Panc1 (cell line): ENCODE measurements at regions of chr2 and their contacts with region 1.

Region 1: DNA sequence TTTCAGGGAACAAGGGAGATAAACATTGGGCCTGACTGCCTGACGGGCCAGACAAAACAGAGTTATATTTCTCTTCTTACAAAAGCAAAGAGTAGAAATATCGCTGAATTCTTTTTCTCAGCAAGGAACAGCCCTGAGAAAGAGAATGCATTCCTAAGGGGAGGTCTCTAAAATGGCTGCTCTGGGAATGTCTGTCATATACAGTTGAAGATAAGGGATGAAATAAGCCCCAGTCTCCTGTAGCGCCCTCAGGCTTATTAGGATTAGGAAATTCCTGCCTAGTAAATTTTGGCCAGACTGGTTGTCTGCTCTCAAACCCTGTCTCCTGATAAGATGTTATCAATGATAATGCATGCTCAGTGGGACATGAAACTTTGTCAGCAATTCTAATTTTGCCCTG is 134.9 kb upstream of the CNTNAP5 start:
- DNase-seq: no peak
- ATAC-seq: no peak
- H3K4me3 ChIP-seq: no peak overlapping the region
- H3K27ac ChIP-seq: no peak overlapping the region
- H3K4me1 ChIP-seq: no peaks in the 10 kb centered on the region
- H3K27me3 ChIP-seq: no peaks in the 10 kb centered on the region
- CTCF ChIP-seq: no peak

Region 2: DNA sequence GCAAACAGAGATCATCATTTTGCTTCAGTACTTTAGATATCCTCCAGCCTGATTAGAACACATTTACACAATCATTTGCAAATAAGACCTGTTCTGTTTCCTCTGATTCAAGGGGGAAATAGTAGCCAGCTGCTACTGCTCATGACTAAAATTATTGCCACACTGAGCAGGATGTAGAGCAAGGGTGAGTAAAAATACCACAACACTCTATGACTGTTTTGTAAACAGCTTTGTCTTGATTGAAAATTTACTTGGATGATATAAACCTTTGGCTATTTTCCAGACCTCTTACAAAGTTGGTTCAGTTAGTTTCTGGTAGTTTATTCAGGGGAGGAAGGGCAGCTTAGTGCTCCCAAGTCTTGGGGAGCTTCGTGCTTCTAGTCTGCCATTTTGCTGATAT is 151.5 kb before region 1 on chr2:
- CTCF ChIA-PET with region 1: no interaction called
- POLR2A ChIA-PET with region 1: no interaction called
- in situ Hi-C with region 1: no loop called
- intact Hi-C with region 1: no loop called
- DNase-seq: no peak
- ATAC-seq: no peak
- H3K4me3 ChIP-seq: no peak overlapping the region
- H3K27ac ChIP-seq: no peak overlapping the region
- H3K4me1 ChIP-seq: no peaks in the 10 kb centered on the region
- H3K27me3 ChIP-seq: no peaks in the 10 kb centered on the region
- CTCF ChIP-seq: no peak

Region 3: DNA sequence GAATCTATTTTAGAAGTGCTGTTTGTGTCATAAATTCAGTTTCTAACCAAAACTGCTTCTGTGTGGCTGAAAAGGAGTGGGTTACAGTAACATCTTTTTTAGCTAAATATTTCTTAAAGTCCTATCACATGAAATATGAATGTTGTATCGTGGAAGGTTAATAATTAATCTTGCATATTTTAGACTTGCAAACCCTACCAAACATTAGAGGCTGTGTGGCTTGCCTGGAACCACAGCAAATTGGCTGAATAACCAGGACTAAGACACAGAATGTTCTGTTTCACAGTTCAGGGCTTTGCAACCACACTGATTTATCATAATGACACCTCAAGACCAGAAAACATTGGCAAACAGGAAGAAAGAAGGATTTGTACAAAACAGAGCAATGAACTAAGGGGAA is 73.9 kb before region 1 on chr2:
- CTCF ChIA-PET with region 1: no interaction called
- POLR2A ChIA-PET with region 1: interaction called, 16 read pairs
- in situ Hi-C with region 1: no loop called
- intact Hi-C with region 1: no loop called
- DNase-seq: no peak
- ATAC-seq: no peak
- H3K4me3 ChIP-seq: no peak overlapping the region
- H3K27ac ChIP-seq: no peak overlapping the region
- H3K4me1 ChIP-seq: no peaks in the 10 kb centered on the region
- H3K27me3 ChIP-seq: no peaks in the 10 kb centered on the region
- CTCF ChIP-seq: no peak

Region 4: DNA sequence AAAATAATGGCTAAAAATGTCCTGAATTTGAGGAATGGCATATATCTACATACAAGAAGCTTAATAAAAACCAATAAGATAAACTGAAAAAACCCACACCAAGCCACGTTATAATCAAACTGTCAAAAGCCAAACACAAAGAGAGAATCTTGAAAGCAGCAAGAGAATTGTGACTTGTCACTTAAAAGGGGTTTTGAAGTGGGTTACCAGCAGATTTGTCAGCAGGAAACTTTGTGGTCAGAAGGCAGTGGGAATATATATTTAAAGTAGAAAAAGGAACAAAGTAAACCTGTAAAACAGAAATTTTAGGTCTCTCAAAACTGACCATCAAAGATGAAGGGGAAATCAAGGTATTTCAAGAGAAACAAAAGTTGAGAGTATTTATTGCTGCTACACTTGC is 37.0 kb before region 1 on chr2:
- CTCF ChIA-PET with region 1: no interaction called
- POLR2A ChIA-PET with region 1: no interaction called
- in situ Hi-C with region 1: no loop called
- intact Hi-C with region 1: no loop called
- DNase-seq: no peak
- ATAC-seq: no peak
- H3K4me3 ChIP-seq: no peak overlapping the region
- H3K27ac ChIP-seq: no peak overlapping the region
- H3K4me1 ChIP-seq: no peaks in the 10 kb centered on the region
- H3K27me3 ChIP-seq: no peaks in the 10 kb centered on the region
- CTCF ChIP-seq: no peak